ENCODE measurements at regions of chr3 and their contacts with region 1.

Region 1: GRCh38 chr3:15377961-15378791 is 45.8 kb upstream of the SH3BP5 start:
- DNase-seq: peak; percentile 92
- H3K4me3 Mint-ChIP-seq: no peak overlapping the region
- H3K27ac Mint-ChIP-seq: peak overlapping the region; percentile 76
- H3K4me1 Mint-ChIP-seq: peaks cover 10% of the 10 kb centered on the region
- H3K27me3 Mint-ChIP-seq: no peaks in the 10 kb centered on the region

Region 2: GRCh38 chr3:15256861-15257341 is 121.3 kb before region 1 on chr3:
- intact Hi-C with region 1: no loop called
- DNase-seq: no peak
- H3K4me3 Mint-ChIP-seq: no peak overlapping the region
- H3K27ac Mint-ChIP-seq: peak overlapping the region; percentile 1
- H3K4me1 Mint-ChIP-seq: peaks cover 12% of the 10 kb centered on the region
- H3K27me3 Mint-ChIP-seq: no peaks in the 10 kb centered on the region

Region 3: GRCh38 chr3:15332405-15333098 is 45.6 kb before region 1 on chr3 and contains the start of gene SH3BP5:
- intact Hi-C with region 1: loop called (anchors 1 kb)
- DNase-seq: peak; percentile 68
- H3K4me3 Mint-ChIP-seq: peak within 1 kb of the TSS; percentile 90
- H3K27ac Mint-ChIP-seq: peak within 1 kb of the TSS; percentile 77
- H3K4me1 Mint-ChIP-seq: peaks cover 45% of the 10 kb centered on the region
- H3K27me3 Mint-ChIP-seq: peaks cover 2% of the 10 kb centered on the region
- total RNA-seq, gene SH3BP5: 14.8 and 15.0 TPM in 2 replicates

Region 4: DNA sequence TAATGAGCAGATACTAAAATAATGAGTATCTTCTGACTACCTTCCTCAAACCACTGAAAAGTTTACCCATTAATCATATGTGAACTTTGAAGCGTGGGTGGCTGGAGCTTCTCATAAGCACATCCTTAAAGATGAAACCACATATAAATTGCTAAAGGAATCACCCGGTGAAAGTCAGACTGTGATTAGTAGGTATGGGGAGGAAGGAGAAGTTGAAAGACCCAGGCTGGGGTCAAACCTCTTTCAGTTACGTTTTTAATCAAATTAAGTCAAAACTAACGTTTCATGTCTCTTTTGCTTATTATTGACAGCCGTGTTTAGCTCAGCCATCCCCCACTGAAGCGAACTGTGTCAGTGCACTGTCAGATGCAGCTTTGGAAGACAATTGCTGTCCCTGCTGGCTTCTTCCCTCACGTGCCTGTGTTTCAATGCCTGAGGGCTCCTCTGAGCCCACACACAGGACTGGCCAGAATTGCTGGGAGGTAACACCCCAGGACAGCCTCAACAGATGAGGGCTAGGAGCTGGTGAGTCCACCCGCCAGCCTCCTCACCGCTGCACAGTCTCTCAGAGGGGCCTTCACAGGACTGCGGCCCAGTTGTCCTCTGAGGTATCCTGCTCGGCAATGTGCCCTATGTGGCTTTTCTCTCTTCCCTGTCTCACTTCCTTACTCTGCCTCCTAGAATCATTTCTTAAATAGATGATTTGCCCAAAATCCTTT is 16.5 kb before region 1 on chr3:
- intact Hi-C with region 1: loop called (anchors 1 kb)
- DNase-seq: peak; percentile 36
- H3K4me3 Mint-ChIP-seq: peak overlapping the region; percentile 30
- H3K27ac Mint-ChIP-seq: peak overlapping the region; percentile 81
- H3K4me1 Mint-ChIP-seq: peaks cover 36% of the 10 kb centered on the region
- H3K27me3 Mint-ChIP-seq: no peaks in the 10 kb centered on the region

Region 5: DNA sequence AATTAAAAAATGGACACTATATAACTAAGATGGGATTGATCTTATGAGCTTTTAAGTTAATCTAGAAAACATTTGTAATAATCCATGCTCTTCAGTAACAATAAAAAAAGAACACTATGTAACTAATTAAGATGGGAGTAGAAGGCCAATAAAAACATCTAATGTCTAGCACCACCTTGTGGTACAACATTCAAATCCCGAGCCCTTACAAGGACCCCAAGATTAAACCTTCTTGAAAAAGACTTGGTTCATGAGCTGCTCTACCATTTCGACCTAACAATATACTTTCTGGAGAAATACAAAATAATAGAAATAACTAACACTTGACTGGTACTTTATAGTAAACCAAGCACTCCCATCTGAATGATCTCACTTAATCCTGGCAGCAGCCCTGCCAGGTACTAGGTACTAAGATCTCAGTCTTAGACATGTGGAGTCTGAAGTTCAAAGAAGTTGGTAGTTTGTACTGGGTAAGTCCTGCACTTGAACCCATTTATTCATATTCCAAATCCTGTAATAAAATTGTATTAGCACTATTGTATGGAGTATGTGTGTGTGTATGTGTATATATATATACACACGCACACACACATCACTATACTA is 27.4 kb after region 1 on chr3:
- intact Hi-C with region 1: loop called (anchors 2 kb)
- DNase-seq: no peak
- H3K4me3 Mint-ChIP-seq: no peak overlapping the region
- H3K27ac Mint-ChIP-seq: no peak overlapping the region
- H3K4me1 Mint-ChIP-seq: peaks cover 5% of the 10 kb centered on the region
- H3K27me3 Mint-ChIP-seq: no peaks in the 10 kb centered on the region